Activated CD8-positive, alpha-beta T cell treated with anti-CD3 and anti-CD28 coated beads for 36 hours (primary cell): ENCODE measurements at regions of chr1 and their contacts with region 1.

Region 1: DNA sequence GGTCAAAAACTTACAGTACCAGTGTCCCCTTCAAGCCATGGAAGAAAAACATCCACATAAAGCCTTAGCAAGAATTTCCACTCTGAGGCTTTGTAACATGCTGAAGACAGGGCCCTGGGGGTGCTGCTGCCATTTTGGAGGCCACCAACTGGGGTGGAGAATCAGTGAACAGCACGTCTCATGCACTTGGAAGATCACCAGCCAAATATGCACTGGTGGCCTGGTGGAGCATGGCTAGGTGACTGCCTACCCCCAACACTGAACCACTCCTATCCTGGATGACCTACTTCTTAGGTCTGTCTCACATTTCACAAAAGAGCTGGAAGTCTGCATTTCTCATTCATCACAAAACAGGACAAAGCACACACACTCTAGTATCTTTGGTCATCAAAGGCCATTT is 126.4 kb downstream of the COL24A1 start:
- DNase-seq: no peak
- ATAC-seq: no peak
- H3K4me3 Mint-ChIP-seq: no peak overlapping the region
- H3K27ac Mint-ChIP-seq: no peak overlapping the region
- H3K4me1 Mint-ChIP-seq: no peaks in the 10 kb centered on the region
- H3K27me3 Mint-ChIP-seq: no peaks in the 10 kb centered on the region
- CTCF ChIP-seq: no peak

Region 2: DNA sequence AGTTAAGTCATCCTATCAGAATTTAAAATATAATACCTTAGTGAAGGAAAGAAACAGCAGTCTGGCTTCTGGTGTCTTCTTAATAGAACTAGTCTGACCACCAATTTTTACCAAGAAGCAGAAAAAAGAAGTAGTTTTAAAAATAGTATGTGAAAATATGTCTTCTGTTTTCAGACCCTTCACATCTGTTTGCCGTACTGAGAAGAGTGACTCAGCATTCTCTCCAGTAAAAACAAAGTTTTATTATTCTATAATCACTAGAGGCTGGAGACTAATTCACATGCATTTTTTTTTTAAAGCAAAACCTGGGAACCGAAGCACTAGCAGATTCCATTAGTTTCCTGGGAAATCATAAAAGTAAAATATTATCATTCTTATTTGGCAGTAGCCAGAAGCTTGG is 37.4 kb before region 1 on chr1:
- CTCF ChIA-PET with region 1: no interaction called
- POLR2A ChIA-PET with region 1: no interaction called
- intact Hi-C with region 1: no loop called
- DNase-seq: no peak
- ATAC-seq: no peak
- H3K4me3 Mint-ChIP-seq: no peak overlapping the region
- H3K27ac Mint-ChIP-seq: no peak overlapping the region
- H3K4me1 Mint-ChIP-seq: no peaks in the 10 kb centered on the region
- H3K27me3 Mint-ChIP-seq: peaks cover 2% of the 10 kb centered on the region
- CTCF ChIP-seq: no peak

Region 3: DNA sequence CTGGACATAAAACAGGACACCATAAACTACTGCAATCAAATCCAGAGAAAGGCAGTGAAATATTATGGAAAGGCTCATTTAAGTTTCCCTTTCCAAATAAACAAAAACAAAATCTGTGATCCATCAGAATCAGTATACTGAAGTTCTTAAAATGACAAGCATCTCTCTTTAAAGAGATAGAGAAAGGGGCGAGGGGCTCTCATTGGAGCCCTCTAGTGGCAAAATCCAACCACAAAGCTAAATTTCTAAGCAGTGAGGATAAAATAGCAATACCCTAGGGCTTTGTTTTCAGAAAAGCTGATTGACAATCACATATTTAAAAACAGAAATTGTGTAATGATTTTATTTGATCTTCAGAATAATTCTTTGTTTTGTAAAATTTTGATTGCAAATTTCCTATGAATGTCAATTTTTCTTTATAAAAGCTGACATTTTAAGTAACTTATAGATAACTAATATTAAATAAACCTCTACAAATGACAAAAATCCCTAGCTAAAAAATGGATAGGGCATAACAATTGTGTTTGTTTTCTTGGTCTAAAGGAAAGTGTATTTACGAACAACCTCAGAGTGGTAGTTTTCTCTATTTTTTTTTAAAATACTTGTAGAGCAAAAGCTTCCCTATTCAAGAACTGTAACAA is 11.8 kb before region 1 on chr1:
- CTCF ChIA-PET with region 1: interaction called, 29 read pairs
- POLR2A ChIA-PET with region 1: no interaction called
- intact Hi-C with region 1: no loop called
- DNase-seq: peak; percentile 33
- ATAC-seq: peak; percentile 45
- H3K4me3 Mint-ChIP-seq: no peak overlapping the region
- H3K27ac Mint-ChIP-seq: no peak overlapping the region
- H3K4me1 Mint-ChIP-seq: no peaks in the 10 kb centered on the region
- H3K27me3 Mint-ChIP-seq: no peaks in the 10 kb centered on the region
- CTCF ChIP-seq: peak; percentile 57